ENCODE measurements at regions of chr19 and their contacts with region 1.

Region 1: GRCh38 chr19:44260363-44261070 is 831 bp downstream of the ZNF233 start:
- DNase-seq: no peak
- ATAC-seq: no peak
- H3K4me3 Mint-ChIP-seq: peak overlapping the region; percentile 79
- H3K27ac Mint-ChIP-seq: peak overlapping the region; percentile 61
- H3K4me1 Mint-ChIP-seq: peaks cover 11% of the 10 kb centered on the region
- H3K27me3 Mint-ChIP-seq: no peaks in the 10 kb centered on the region
- CTCF ChIP-seq: no peak

Region 2: GRCh38 chr19:44304659-44305193 is 44.2 kb after region 1 on chr19 and contains the start of gene ZNF235:
- CTCF ChIA-PET with region 1: no interaction called
- POLR2A ChIA-PET with region 1: interaction called, 3 read pairs
- intact Hi-C with region 1: loop called (anchors 1 kb)
- DNase-seq: peak; percentile 61
- ATAC-seq: peak; percentile 97
- H3K4me3 Mint-ChIP-seq: peak within 1 kb of the TSS; percentile 96
- H3K27ac Mint-ChIP-seq: peak within 1 kb of the TSS; percentile 76
- H3K4me1 Mint-ChIP-seq: peaks cover 20% of the 10 kb centered on the region
- H3K27me3 Mint-ChIP-seq: peaks cover 7% of the 10 kb centered on the region
- CTCF ChIP-seq: no peak
- total RNA-seq, gene ZNF235: 11.6 and 14.5 TPM in 2 replicates